Activated B cell treated with CpG ODN at 0.5 μM for 24 hours (primary cell): ENCODE measurements at regions of chr22 and their contacts with region 1.

Region 1: GRCh38 chr22:31302006-31302405 is 9.7 kb upstream of the PIK3IP1 start:
- DNase-seq: no peak
- ATAC-seq: no peak
- H3K4me3 Mint-ChIP-seq: no peak overlapping the region
- H3K27ac Mint-ChIP-seq: no peak overlapping the region
- H3K4me1 Mint-ChIP-seq: peaks cover 11% of the 10 kb centered on the region
- H3K27me3 Mint-ChIP-seq: no peaks in the 10 kb centered on the region
- CTCF ChIP-seq: no peak

Region 2: GRCh38 chr22:31265841-31266585 is 36.0 kb before region 1 on chr22:
- CTCF ChIA-PET with region 1: no interaction called
- POLR2A ChIA-PET with region 1: no interaction called
- intact Hi-C with region 1: no loop called
- DNase-seq: no peak
- ATAC-seq: no peak
- H3K4me3 Mint-ChIP-seq: no peak overlapping the region
- H3K27ac Mint-ChIP-seq: no peak overlapping the region
- H3K4me1 Mint-ChIP-seq: no peaks in the 10 kb centered on the region
- H3K27me3 Mint-ChIP-seq: no peaks in the 10 kb centered on the region
- CTCF ChIP-seq: no peak

Region 3: DNA sequence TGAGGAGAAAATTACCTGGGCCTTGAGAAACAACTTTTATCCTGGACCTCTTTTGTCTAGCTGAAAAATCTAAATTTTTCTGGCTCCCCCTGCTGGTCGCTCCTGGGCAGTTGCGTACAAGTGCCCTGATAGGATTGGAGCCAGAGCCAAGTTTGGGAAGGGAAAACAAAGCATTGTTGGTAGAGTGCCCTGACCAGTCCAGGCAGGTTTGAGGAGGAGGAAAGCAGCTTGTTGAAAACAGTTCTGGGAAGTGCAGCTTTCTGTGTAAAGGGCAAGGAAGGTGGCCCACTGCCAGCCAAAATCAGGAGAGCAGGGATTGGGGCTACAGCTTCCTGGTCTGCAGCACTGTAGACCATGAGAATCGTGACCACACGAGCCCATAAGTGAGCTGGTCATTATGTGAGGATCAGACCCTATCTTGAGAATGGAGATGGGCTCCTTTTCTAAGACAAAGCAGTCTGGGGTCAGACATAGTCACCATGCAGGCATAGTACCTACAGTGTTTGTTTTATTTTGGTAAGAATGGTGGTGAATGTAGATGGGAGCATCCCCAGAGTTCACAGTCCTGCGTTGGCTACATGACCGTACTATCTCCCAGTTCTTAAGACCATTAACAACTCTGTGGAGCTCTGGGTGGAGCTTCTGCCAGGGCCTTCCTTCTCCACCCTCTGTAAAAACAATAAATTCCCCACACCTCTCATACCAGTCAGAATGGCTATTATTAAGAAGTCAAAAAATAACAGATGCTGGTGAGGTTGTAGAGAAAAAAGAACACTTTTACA is 11.6 kb after region 1 on chr22:
- CTCF ChIA-PET with region 1: interaction called, 10 read pairs
- POLR2A ChIA-PET with region 1: no interaction called
- intact Hi-C with region 1: no loop called
- DNase-seq: peak; percentile 39
- ATAC-seq: peak; percentile 54
- H3K4me3 Mint-ChIP-seq: no peak overlapping the region
- H3K27ac Mint-ChIP-seq: no peak overlapping the region
- H3K4me1 Mint-ChIP-seq: peaks cover 7% of the 10 kb centered on the region
- H3K27me3 Mint-ChIP-seq: no peaks in the 10 kb centered on the region
- CTCF ChIP-seq: no peak

Region 4: GRCh38 chr22:31399211-31400028 is 97.4 kb after region 1 on chr22 and contains the start of gene DRG1:
- CTCF ChIA-PET with region 1: no interaction called
- POLR2A ChIA-PET with region 1: no interaction called
- intact Hi-C with region 1: no loop called
- DNase-seq: peak; percentile 97
- ATAC-seq: peak; percentile 98
- H3K4me3 Mint-ChIP-seq: peak within 1 kb of the TSS; percentile 93
- H3K27ac Mint-ChIP-seq: peak within 1 kb of the TSS; percentile 88
- H3K4me1 Mint-ChIP-seq: peaks cover 20% of the 10 kb centered on the region
- H3K27me3 Mint-ChIP-seq: no peaks in the 10 kb centered on the region
- CTCF ChIP-seq: no peak
- total RNA-seq, gene DRG1: 68.5 and 71.1 TPM in 2 replicates

Region 5: DNA sequence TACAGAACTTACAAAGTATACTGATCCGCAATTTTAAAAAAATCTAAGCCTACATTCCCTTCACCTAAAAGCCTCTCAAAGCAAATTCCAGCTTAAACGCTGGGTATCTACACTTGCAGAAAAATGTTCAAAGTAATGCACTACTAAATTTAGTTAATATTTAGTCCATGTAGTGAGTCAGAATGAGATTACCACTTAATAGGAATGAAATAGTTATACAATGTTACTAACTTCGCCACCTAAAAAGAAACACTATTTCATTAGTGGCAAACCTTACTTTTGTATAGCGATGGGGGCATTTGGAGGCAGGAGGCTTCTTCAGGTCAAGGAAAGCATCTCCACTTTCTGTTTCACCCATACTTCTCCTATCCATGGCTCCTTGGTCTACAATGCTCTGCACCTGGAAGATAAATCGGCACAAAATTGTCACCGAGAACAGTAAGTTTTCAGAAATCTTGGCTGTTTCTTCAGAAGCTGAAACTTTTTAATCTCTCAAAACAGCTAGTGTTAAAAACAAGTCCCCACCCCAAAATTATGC is 186.4 kb after region 1 on chr22:
- CTCF ChIA-PET with region 1: no interaction called
- POLR2A ChIA-PET with region 1: no interaction called
- intact Hi-C with region 1: no loop called
- DNase-seq: no peak
- ATAC-seq: no peak
- H3K4me3 Mint-ChIP-seq: peak overlapping the region; percentile 72
- H3K27ac Mint-ChIP-seq: peak overlapping the region; percentile 85
- H3K4me1 Mint-ChIP-seq: peaks cover 44% of the 10 kb centered on the region
- H3K27me3 Mint-ChIP-seq: no peaks in the 10 kb centered on the region
- CTCF ChIP-seq: no peak

Region 6: GRCh38 chr22:31526270-31526669 is 224.3 kb after region 1 on chr22:
- CTCF ChIA-PET with region 1: no interaction called
- POLR2A ChIA-PET with region 1: no interaction called
- intact Hi-C with region 1: no loop called
- DNase-seq: no peak
- ATAC-seq: peak; percentile 85
- H3K4me3 Mint-ChIP-seq: no peak overlapping the region
- H3K27ac Mint-ChIP-seq: peak overlapping the region; percentile 79
- H3K4me1 Mint-ChIP-seq: peaks cover 26% of the 10 kb centered on the region
- H3K27me3 Mint-ChIP-seq: no peaks in the 10 kb centered on the region
- CTCF ChIP-seq: no peak